ENCODE measurements at regions of chr1 and their contacts with region 1.

Region 1: DNA sequence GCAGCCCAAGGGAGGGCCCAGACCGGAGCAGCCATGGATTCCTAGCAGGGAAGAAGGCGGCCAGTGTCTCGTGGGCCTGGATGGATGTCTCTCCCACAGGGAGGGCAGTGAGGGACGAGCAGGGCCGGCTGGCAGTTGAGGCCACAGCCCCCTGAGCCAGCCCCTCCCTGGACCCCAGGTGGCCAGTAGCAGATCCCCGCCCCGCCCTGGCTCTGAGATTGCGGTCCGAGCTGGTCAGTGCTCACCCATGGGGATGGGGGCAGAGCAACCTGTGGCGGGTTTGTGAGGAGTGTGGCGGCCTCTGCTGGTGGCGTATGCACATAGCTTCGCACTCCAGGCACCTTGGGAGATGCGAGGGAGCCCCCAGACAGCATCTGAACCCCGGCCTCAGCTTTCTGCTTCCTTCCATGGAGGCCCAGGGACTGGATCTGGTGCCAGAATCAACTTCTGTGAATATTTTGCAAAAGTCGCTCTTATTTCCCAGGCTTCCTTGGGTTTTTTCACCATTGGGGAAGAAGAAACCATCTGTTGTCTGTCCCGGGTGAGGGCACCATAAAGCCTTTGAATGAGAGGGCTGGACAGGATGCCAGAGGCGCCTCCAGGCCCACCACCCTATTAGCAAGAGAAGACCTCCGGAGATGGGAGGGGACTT is 8.4 kb upstream of the KCNN3 start:
- DNase-seq: peak; percentile 54 to 82 (median 64)
- ATAC-seq: peak; percentile 91
- H3K4me3 ChIP-seq: no peak overlapping the region
- H3K4me3 Mint-ChIP-seq: no peak overlapping the region
- H3K27ac ChIP-seq: no peak overlapping the region
- H3K27ac Mint-ChIP-seq: no peak overlapping the region
- H3K4me1 ChIP-seq: no peaks in the 10 kb centered on the region
- H3K4me1 Mint-ChIP-seq: no peaks in the 10 kb centered on the region
- H3K27me3 ChIP-seq: no peaks in the 10 kb centered on the region
- H3K27me3 Mint-ChIP-seq: peaks cover 5% of the 10 kb centered on the region
- CTCF ChIP-seq: peak; percentile 91

Region 2: DNA sequence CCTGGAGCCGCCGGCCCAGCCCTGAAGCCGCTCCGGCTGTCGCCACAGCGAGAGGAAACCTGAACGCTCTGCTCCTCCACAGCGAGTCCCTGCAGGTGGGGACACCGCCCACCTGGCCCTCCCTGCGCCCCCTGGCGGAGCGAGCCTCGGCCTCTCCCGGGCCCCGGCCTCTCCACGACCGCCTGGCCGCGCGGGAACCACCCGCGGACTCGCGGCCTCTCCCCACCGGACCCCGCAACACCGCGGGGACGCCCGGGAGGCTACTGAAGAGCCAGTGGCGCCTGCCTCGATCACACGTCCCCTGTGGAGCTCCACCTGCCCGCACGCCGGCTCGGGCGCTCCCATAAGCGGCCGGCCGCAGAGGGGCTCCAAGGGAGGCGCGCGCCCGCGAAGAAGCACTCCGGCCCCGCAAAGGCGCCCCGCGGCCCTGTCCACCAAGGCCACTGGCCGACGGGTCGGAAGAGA is 118.0 kb before region 1 on chr1:
- CTCF ChIA-PET with region 1: interaction called, 3 read pairs
- POLR2A ChIA-PET with region 1: no interaction called
- intact Hi-C with region 1: loop called in 1 of 2 experiments (anchors 5 kb)
- DNase-seq: peak; percentile 70 to 92 (median 83)
- ATAC-seq: peak; percentile 88
- H3K4me3 ChIP-seq: peak overlapping the region; percentile 44
- H3K4me3 Mint-ChIP-seq: no peak overlapping the region
- H3K27ac ChIP-seq: no peak overlapping the region
- H3K27ac Mint-ChIP-seq: no peak overlapping the region
- H3K4me1 ChIP-seq: peaks cover 21% of the 10 kb centered on the region
- H3K4me1 Mint-ChIP-seq: peaks cover 42% of the 10 kb centered on the region
- H3K27me3 ChIP-seq: no peaks in the 10 kb centered on the region
- H3K27me3 Mint-ChIP-seq: no peaks in the 10 kb centered on the region
- CTCF ChIP-seq: peak; percentile 92

Region 3: DNA sequence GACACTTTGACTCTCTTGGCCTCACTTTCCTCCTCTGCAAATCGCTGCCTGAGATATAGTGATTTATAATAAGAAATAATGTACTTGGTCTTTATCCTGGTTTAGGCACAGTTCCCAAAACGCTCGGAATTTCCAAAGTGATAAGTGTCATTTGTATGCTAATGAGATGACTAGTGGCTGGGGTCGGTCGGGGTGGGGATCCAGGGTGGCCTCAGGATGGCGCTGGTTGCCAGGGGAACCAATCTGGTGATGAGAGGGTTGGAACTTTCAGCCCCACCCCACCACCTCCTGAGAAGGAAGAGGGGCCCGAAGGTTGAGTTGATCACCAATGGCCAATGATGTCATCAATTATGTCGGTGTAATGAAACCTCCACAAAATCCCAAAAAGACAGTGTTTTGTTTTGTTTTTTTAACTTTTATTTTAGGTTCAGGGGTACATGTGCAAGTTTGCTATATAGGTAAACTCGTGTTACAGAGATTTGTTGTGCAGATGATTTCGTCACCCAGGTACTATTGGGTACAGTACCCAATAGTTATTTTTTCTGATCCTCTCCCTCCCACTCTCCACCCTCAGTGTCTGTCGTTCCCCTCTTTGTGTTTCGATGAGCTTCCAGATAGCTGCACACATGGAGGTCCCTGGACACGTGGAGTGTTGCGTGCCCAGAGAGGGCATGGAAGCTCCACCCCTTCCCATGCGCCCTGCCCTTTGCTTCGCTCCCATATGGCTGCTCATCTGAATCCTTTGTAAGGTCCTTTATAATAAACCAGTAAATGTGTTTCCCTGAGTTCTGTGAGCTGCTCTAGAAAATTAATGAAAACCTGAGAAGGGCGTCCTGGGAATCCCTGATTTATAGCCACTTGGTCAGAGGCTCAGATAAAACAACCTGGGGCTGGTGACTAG is 105.6 kb before region 1 on chr1:
- CTCF ChIA-PET with region 1: interaction called, 3 read pairs
- POLR2A ChIA-PET with region 1: no interaction called
- intact Hi-C with region 1: loop called in 1 of 2 experiments (anchors 2 kb)
- DNase-seq: peak in 9 of 14 experiments; percentile 16 to 57 (median 39)
- ATAC-seq: peak; percentile 39
- H3K4me3 ChIP-seq: no peak overlapping the region
- H3K4me3 Mint-ChIP-seq: no peak overlapping the region
- H3K27ac ChIP-seq: no peak overlapping the region
- H3K27ac Mint-ChIP-seq: no peak overlapping the region
- H3K4me1 ChIP-seq: no peaks in the 10 kb centered on the region
- H3K4me1 Mint-ChIP-seq: no peaks in the 10 kb centered on the region
- H3K27me3 ChIP-seq: no peaks in the 10 kb centered on the region
- H3K27me3 Mint-ChIP-seq: no peaks in the 10 kb centered on the region
- CTCF ChIP-seq: peak; percentile 22

Region 4: GRCh38 chr1:154809436-154810413 is 68.8 kb before region 1 on chr1:
- CTCF ChIA-PET with region 1: no interaction called
- POLR2A ChIA-PET with region 1: no interaction called
- intact Hi-C with region 1: no loop called
- DNase-seq: peak in 1 of 14 experiments; percentile 23
- ATAC-seq: no peak
- H3K4me3 ChIP-seq: no peak overlapping the region
- H3K4me3 Mint-ChIP-seq: no peak overlapping the region
- H3K27ac ChIP-seq: no peak overlapping the region
- H3K27ac Mint-ChIP-seq: no peak overlapping the region
- H3K4me1 ChIP-seq: no peaks in the 10 kb centered on the region
- H3K4me1 Mint-ChIP-seq: no peaks in the 10 kb centered on the region
- H3K27me3 ChIP-seq: peaks cover 0 to 5% of the 10 kb centered on the region in 2 experiments
- H3K27me3 Mint-ChIP-seq: peaks cover 10% of the 10 kb centered on the region
- CTCF ChIP-seq: no peak

Measured in CD4-positive, alpha-beta T cell (primary cell).